Heart left ventricle (tissue), 16 donors: ENCODE measurements at regions of chr15 and their contacts with region 1.

Region 1: GRCh38 chr15:47473832-47474231 is 243.5 kb upstream of the SEMA6D start:
- DNase-seq: peak; percentile 63 to 76 (median 74)
- ATAC-seq: peak; percentile 93 to 97 (median 94)
- H3K4me3 ChIP-seq: no peak overlapping the region
- H3K27ac ChIP-seq: peak overlapping the region in 8 of 12 donors; percentile 7 to 57 (median 34)
- H3K4me1 ChIP-seq: peaks cover 0 to 28% (median 14%) of the 10 kb centered on the region in 12 donors
- H3K27me3 ChIP-seq: no peaks in the 10 kb centered on the region
- CTCF ChIP-seq: no peak
- POLR2A ChIP-seq: no peak

Region 2: GRCh38 chr15:47577000-47577399 is 103.2 kb after region 1 on chr15:
- intact Hi-C with region 1: loop called in 1 of 10 experiments (anchors 10 kb)
- DNase-seq: no peak
- ATAC-seq: no peak
- H3K4me3 ChIP-seq: no peak overlapping the region
- H3K27ac ChIP-seq: no peak overlapping the region
- H3K4me1 ChIP-seq: peaks cover 0 to 11% (median 5%) of the 10 kb centered on the region in 12 donors
- H3K27me3 ChIP-seq: no peaks in the 10 kb centered on the region
- CTCF ChIP-seq: no peak
- POLR2A ChIP-seq: no peak

Region 3: GRCh38 chr15:47618241-47618640 is 144.4 kb after region 1 on chr15:
- intact Hi-C with region 1: loop called in 1 of 10 experiments (anchors 10 kb)
- DNase-seq: no peak
- ATAC-seq: no peak
- H3K4me3 ChIP-seq: no peak overlapping the region
- H3K27ac ChIP-seq: no peak overlapping the region
- H3K4me1 ChIP-seq: no peaks in the 10 kb centered on the region
- H3K27me3 ChIP-seq: peaks cover 0 to 14% (median 0%) of the 10 kb centered on the region in 9 donors
- CTCF ChIP-seq: no peak
- POLR2A ChIP-seq: no peak

Region 4: GRCh38 chr15:47688573-47689086 is 214.8 kb after region 1 on chr15:
- intact Hi-C with region 1: loop called in 1 of 10 experiments (anchors 5 kb)
- DNase-seq: no peak
- ATAC-seq: no peak
- H3K4me3 ChIP-seq: no peak overlapping the region
- H3K27ac ChIP-seq: no peak overlapping the region
- H3K4me1 ChIP-seq: no peaks in the 10 kb centered on the region
- H3K27me3 ChIP-seq: no peaks in the 10 kb centered on the region
- CTCF ChIP-seq: no peak
- POLR2A ChIP-seq: no peak